ENCODE measurements at regions of chr12 and their contacts with region 1.

Region 1: GRCh38 chr12:74537707-74538385 is at the start of gene ATXN7L3B:
- DNase-seq: peak; percentile 95
- ATAC-seq: peak; percentile 94
- H3K4me3 Mint-ChIP-seq: peak within 1 kb of the TSS; percentile 95
- H3K27ac Mint-ChIP-seq: peak within 1 kb of the TSS; percentile 98
- H3K4me1 Mint-ChIP-seq: peaks cover 63% of the 10 kb centered on the region
- H3K27me3 Mint-ChIP-seq: no peaks in the 10 kb centered on the region
- CTCF ChIP-seq: no peak
- total RNA-seq, gene ATXN7L3B: 29.2 and 30.7 TPM in 2 replicates

Region 2: DNA sequence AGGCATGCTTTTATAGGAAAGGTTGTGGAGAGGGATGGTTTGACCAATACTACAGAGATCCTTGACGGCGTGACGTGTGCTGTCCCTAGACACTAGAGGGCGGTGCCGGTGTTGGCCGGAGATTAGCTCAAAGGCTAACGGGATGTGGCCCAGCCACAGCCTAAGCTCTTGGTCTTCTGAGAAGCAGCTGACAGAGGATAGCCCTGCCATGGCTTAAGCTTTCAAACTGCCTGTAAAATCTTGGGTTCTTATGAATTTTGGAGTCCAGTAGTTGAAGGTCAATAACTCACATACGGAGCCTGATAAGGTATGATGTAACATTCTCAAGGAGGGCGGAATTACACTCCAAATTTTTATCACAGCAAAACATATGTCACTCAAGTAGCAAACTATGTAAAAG is 515.9 kb before region 1 on chr12:
- CTCF ChIA-PET with region 1: no interaction called
- POLR2A ChIA-PET with region 1: no interaction called
- intact Hi-C with region 1: loop called (anchors 5 kb)
- DNase-seq: no peak
- ATAC-seq: peak; percentile 37
- H3K4me3 Mint-ChIP-seq: no peak overlapping the region
- H3K27ac Mint-ChIP-seq: no peak overlapping the region
- H3K4me1 Mint-ChIP-seq: no peaks in the 10 kb centered on the region
- H3K27me3 Mint-ChIP-seq: no peaks in the 10 kb centered on the region
- CTCF ChIP-seq: no peak

Region 3: DNA sequence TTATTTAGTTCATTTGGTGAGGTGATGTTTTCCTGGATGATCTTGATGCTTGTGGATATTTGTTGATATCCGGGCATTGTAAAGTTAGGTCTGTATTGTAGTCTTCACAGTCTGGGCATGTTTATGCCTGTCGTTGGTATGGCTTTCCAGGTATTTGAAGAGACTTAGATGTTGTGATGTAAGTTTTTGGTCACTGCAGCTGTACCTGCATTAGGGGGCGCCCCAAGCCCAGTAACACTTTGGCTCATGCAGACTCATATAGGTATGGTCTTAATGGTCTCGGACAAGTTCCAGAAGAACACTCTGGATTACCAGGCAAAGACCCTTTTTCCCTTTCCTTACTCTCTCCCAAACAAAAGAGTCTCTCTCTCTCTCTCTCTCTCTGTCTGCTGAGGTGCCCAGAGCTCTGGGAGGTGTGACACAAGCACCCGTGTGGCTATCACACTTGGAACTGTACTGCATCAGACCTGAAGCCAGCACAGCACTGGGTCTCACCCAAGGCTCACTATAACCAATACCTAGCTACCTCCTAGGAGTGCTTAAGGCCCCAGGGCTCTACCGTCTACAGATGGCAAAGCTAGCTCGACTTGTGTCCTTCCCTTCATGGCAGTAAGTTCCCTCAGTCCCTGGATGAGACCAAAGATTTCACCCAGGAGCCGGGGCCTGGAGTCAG is 426.0 kb before region 1 on chr12:
- CTCF ChIA-PET with region 1: no interaction called
- POLR2A ChIA-PET with region 1: no interaction called
- intact Hi-C with region 1: loop called (anchors 5 kb)
- DNase-seq: no peak
- ATAC-seq: no peak
- H3K4me3 Mint-ChIP-seq: no peak overlapping the region
- H3K27ac Mint-ChIP-seq: no peak overlapping the region
- H3K4me1 Mint-ChIP-seq: no peaks in the 10 kb centered on the region
- H3K27me3 Mint-ChIP-seq: no peaks in the 10 kb centered on the region
- CTCF ChIP-seq: no peak

Region 4: DNA sequence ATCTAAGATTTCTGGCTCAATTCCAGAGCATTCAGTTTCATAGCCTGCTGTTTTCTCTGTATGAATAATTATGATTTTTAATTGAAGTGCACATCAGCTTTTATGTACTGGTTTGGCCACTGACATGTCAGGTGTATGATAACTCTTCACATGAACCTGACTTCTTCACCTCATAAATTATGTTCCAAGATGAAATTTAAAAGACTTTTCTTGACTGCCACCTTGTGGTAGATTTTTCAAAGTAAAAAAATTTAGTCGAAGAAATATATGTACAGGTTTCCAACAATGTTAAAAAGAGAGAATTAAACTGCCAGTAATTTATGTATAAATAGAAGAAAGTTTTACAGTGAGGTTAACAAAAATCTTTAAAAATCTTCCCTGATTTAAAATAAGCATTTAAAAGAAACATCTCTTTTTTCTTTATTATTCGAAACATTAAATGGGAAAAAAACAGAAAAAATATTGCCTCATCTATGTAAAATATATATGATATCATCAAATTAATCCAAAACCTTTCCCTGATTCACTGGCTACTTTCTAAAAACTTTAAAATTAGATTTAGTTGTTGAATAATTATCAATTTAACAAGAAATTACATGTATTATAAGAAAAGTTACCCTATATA is 125.1 kb before region 1 on chr12:
- CTCF ChIA-PET with region 1: no interaction called
- POLR2A ChIA-PET with region 1: no interaction called
- intact Hi-C with region 1: loop called (anchors 2 kb)
- DNase-seq: no peak
- ATAC-seq: no peak
- H3K4me3 Mint-ChIP-seq: no peak overlapping the region
- H3K27ac Mint-ChIP-seq: no peak overlapping the region
- H3K4me1 Mint-ChIP-seq: no peaks in the 10 kb centered on the region
- H3K27me3 Mint-ChIP-seq: no peaks in the 10 kb centered on the region
- CTCF ChIP-seq: no peak

Region 5: DNA sequence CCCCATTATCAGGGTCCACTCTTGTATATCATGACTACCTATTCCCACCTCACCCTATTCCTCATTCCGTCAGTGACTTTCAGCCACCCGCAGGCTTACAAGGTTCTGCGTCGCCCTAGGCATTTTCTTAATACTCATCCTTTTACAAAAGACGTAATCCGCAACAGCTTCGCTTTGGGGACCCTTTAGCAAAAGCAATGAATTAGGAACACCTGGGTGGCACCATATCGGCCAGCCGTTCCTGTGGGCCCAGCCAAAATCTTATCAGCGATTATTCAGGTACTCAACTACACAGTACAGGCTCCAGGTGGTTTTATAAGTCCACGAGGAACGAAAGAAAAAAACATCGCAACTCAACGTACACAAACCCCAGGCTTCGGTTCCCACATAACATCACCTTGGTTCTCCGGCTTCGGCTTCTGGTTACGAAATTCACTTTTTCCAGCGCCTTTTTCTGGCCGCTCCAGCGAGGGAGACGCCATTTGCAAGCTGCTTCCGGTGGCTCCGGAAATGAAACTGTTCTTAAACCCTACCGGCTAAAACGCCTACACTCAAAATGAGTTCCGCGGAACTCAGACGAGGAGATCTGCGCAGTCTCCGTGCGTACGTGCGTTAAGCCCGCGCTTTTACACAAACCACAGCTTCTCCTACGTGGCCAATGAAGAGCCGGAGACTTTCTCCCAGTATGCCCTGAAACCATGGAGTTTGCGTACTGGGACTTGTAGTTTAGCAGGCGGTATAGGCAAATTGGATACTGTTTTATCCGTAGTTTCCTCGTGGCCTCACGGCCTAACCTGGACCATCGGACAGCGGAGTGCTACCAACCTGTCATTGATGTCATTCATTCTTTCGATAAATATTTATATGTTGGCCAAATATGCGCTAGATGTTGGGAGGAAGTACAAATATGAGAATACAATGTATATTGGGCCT is 973.5 kb after region 1 on chr12 and contains the start of gene KRR1:
- CTCF ChIA-PET with region 1: no interaction called
- POLR2A ChIA-PET with region 1: no interaction called
- intact Hi-C with region 1: loop called (anchors 1 kb)
- DNase-seq: peak; percentile 72
- ATAC-seq: peak; percentile 96
- H3K4me3 Mint-ChIP-seq: peak within 1 kb of the TSS; percentile 99
- H3K27ac Mint-ChIP-seq: peak within 1 kb of the TSS; percentile 99
- H3K4me1 Mint-ChIP-seq: peaks cover 27% of the 10 kb centered on the region
- H3K27me3 Mint-ChIP-seq: no peaks in the 10 kb centered on the region
- CTCF ChIP-seq: no peak
- total RNA-seq, gene KRR1: 75.0 and 85.1 TPM in 2 replicates